Right cardiac atrium (tissue), 5 donors: ENCODE measurements at regions of chr20 and their contacts with region 1.

Region 1: DNA sequence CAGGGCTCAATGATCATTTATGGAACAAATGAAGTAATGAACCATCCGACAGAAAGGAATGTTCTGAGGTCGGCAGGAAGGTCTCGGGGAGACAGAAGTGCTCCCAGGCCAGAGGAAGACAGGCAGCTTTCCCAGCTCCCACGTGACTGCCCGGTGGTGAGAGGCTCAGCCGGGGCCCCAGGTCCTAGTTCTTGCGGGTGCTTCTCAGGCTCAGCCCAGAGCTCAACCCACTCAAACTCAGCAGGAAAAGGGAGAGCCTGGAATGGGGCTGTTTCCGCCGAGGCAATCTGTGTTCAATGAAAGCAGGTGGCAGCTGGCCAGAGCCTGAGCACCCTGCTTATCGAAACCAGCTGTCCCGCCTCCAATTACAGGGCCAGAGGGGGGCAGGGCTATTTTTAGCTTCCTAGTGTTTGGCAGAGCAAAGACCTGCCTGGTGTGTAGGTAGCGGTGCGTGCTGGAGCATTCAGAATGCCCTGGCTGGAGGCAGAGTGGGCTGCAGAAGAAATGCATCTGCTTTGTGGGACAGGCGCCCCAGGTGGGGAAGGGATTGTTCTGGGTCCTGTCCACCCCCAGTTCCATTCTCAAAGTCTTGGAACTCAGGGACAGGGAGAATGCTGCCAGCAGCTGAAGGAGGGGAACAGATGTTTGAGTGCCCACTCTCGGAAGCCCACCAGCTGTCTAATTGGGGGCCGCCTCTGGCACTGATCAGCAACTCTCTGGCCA is 145.1 kb downstream of the PREX1 start:
- DNase-seq: peak; percentile 88 to 96 (median 93)
- ATAC-seq: peak; percentile 81 to 86
- H3K4me3 ChIP-seq: no peak overlapping the region
- H3K27ac ChIP-seq: peak overlapping the region; percentile 21
- H3K4me1 ChIP-seq: peaks cover 32% of the 10 kb centered on the region
- H3K27me3 ChIP-seq: no peaks in the 10 kb centered on the region

Region 2: DNA sequence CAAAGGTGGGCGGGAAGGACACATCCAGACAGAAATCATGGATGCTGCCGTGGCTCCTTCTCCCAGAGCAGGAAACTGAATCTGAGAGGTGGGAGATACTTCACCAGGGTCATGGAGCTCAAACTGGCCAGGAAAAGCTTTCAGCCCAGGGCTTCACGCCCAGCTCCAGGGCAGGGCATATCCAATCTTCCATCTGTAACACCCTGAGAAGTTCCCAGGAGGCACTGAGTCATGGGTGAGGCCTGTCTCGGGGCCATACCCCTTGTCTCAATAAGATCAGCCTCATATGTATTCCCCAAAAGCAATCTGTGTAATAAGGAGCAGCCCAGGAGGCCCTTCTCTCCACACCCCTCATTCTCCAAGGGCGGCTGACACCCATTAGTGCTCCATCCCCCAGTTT is 458.2 kb before region 1 on chr20:
- intact Hi-C with region 1: no loop called
- DNase-seq: no peak
- ATAC-seq: no peak
- H3K4me3 ChIP-seq: no peak overlapping the region
- H3K27ac ChIP-seq: no peak overlapping the region
- H3K4me1 ChIP-seq: no peaks in the 10 kb centered on the region
- H3K27me3 ChIP-seq: no peaks in the 10 kb centered on the region

Region 3: GRCh38 chr20:48818407-48818987 is 135.8 kb after region 1 on chr20:
- intact Hi-C with region 1: loop called in 1 of 4 experiments (anchors 10 kb)
- DNase-seq: no peak
- ATAC-seq: no peak
- H3K4me3 ChIP-seq: no peak overlapping the region
- H3K27ac ChIP-seq: no peak overlapping the region
- H3K4me1 ChIP-seq: no peaks in the 10 kb centered on the region
- H3K27me3 ChIP-seq: no peaks in the 10 kb centered on the region